ENCODE measurements at regions of chr4 and their contacts with region 1.

Region 1: DNA sequence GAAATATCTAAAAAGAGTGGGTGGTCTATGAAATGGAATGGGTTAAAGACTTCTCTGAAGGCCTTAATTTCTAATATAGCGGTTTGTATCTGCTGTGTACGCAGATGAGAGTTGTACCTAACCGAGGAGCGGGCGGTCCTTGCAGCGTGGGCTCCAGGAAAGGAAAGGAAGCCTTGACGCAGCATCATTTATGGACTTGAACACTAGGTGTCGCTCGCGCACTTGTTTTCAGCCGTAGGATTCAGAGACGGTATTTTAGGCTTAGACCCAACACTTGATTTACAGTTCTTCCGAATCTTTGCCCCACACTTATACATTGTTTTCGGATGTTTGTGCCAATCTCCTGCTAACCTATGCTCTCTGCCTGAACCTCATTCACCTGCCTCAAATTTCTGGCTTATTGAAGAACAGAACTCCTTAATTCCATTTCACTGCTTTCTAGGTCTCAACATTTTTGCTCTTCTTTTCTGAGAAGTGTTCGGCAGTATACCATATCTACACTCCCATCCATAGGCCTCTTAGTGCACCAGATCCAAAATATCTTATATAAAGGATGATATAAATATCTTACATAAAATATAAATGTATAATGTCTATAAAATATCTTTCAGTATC is 48.9 kb upstream of the AADAT start:
- DNase-seq: peak; percentile 50 to 67
- ATAC-seq: peak in 7 of 8 donors; percentile 38 to 62 (median 47)
- H3K4me3 ChIP-seq: no peak overlapping the region
- H3K27ac ChIP-seq: no peak overlapping the region
- H3K4me1 ChIP-seq: peaks cover 0 to 4% (median 0%) of the 10 kb centered on the region in 9 donors
- H3K27me3 ChIP-seq: peaks cover 0 to 3% (median 0%) of the 10 kb centered on the region in 7 donors
- CTCF ChIP-seq: peak; percentile 41 to 86 (median 83)

Region 2: GRCh38 chr4:169039251-169039954 is 1099.3 kb before region 1 on chr4:
- intact Hi-C with region 1: loop called in 1 of 10 experiments (anchors 5 kb)
- DNase-seq: no peak
- ATAC-seq: no peak
- H3K4me3 ChIP-seq: no peak overlapping the region
- H3K27ac ChIP-seq: no peak overlapping the region
- H3K4me1 ChIP-seq: no peaks in the 10 kb centered on the region
- H3K27me3 ChIP-seq: no peaks in the 10 kb centered on the region
- CTCF ChIP-seq: no peak

Region 3: GRCh38 chr4:169690787-169691186 is 447.9 kb before region 1 on chr4:
- intact Hi-C with region 1: no loop called
- DNase-seq: no peak
- ATAC-seq: no peak
- H3K4me3 ChIP-seq: no peak overlapping the region
- H3K27ac ChIP-seq: no peak overlapping the region
- H3K4me1 ChIP-seq: no peaks in the 10 kb centered on the region
- H3K27me3 ChIP-seq: no peaks in the 10 kb centered on the region
- CTCF ChIP-seq: no peak

Region 4: DNA sequence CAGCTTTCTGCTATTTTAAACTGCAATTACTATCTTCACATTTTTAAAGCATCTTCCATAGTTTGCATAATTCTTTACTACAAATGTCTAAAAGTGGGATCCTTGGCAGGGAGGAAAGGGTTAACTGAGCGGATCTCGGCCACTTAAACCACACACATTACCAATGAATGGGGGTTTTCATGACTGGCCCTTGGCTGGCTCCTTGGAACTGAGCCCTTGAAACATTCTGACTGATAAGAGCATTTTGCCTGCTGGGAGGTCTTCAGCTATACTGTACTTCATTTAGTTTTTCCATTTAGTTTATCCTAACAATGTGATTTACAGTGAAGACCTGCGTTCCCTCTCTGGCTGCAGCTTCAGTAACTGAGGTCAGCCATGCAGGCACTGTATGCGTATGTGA is 80.8 kb before region 1 on chr4:
- intact Hi-C with region 1: no loop called
- DNase-seq: no peak
- ATAC-seq: no peak
- H3K4me3 ChIP-seq: no peak overlapping the region
- H3K27ac ChIP-seq: no peak overlapping the region
- H3K4me1 ChIP-seq: no peaks in the 10 kb centered on the region
- H3K27me3 ChIP-seq: no peaks in the 10 kb centered on the region
- CTCF ChIP-seq: no peak

Region 5: GRCh38 chr4:170853422-170854021 is 714.8 kb after region 1 on chr4:
- intact Hi-C with region 1: loop called in 1 of 10 experiments (anchors 5 kb)
- DNase-seq: peak; percentile 3 to 10
- ATAC-seq: no peak
- H3K4me3 ChIP-seq: no peak overlapping the region
- H3K27ac ChIP-seq: no peak overlapping the region
- H3K4me1 ChIP-seq: no peaks in the 10 kb centered on the region
- H3K27me3 ChIP-seq: no peaks in the 10 kb centered on the region
- CTCF ChIP-seq: peak in 8 of 9 donors; percentile 21 to 66 (median 56)

Measured in heart right ventricle (tissue), 16 donors.